ENCODE measurements at regions of chr15 and their contacts with region 1.

Region 1: GRCh38 chr15:47987908-47988532 is 132.8 kb upstream of the SLC24A5 start:
- DNase-seq: peak; percentile 69
- H3K4me3 ChIP-seq: no peak overlapping the region
- H3K27ac ChIP-seq: no peak overlapping the region
- H3K27me3 ChIP-seq: no peaks in the 10 kb centered on the region
- CTCF ChIP-seq: peak; percentile 64

Region 2: DNA sequence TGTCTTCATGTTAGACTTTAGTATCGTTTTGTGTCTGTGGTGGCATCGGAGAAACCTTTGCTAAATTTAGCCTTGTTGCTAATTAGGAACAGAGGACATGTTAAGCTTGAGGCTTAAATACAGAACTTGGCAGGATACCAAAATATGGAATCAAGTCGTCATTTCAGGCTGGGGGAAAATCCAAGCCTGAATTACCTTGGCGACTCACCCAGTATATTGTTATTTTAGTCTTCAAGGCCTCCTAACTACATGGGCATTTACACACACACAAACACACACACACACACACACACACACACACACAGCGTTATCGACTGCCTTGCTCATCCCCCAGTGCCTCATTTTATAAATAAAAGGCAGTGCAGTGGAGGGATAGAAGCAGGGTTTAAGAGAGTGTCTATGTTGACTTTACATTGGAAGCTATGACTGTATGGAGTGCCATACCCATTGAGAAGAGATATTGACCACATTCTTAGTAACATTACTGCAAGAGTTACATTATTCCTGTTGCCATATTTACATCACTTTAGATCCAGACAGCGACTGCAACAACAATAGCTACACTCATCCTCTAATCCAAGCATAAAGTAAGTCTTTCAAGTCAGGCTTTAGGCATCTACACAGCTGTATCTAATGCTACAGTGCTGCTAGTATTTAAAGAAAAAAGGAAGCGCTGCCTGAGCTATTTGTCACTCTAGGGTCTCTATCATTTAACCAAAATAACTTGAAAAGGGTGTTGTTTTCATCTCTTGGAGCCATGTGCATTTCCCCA is 481.5 kb before region 1 on chr15:
- in situ Hi-C with region 1: loop called (anchors 25 kb)
- DNase-seq: peak; percentile 37
- H3K4me3 ChIP-seq: no peak overlapping the region
- H3K27ac ChIP-seq: no peak overlapping the region
- H3K27me3 ChIP-seq: no peaks in the 10 kb centered on the region
- CTCF ChIP-seq: no peak

Region 3: DNA sequence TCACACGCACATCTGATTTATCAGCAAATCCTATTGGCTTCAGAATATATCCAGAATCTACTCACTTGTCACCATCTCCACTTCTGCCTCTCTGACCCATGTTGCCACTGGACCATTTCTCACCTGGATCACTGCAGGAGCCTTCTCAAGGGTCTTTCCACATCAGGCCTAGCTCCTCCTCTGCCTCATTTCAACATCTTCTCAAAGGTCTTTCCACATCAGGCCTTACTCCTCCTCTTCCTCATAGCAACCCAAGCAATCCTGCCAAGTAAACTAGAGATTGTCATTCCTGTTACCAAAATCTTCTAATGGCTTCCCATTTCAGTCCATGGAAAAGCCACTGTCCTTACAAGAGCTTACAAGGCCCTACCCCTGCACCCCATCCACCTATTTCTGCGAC is 325.2 kb after region 1 on chr15:
- in situ Hi-C with region 1: no loop called
- DNase-seq: no peak
- H3K4me3 ChIP-seq: no peak overlapping the region
- H3K27ac ChIP-seq: no peak overlapping the region
- H3K27me3 ChIP-seq: no peaks in the 10 kb centered on the region
- CTCF ChIP-seq: no peak

Region 4: DNA sequence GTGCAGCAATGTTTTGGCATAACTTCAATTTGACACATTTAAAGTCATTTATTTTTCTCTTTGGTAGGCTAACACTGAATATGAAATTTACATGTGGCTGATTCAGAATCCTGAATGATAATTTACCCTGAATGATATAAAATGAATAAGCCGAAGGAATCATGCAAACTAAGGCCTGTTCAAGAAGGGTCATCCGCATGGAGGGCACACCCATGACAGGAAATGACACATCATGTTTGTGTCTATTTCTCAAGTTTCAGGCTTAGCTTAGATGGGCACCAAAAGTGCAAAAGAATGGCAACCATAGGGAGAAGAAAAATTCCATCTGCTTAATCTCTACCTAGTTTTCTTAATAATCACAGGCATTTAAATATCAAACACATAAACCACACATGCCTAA is 484.7 kb after region 1 on chr15:
- in situ Hi-C with region 1: no loop called
- DNase-seq: peak; percentile 53
- H3K4me3 ChIP-seq: no peak overlapping the region
- H3K27ac ChIP-seq: peak overlapping the region; percentile 74
- H3K27me3 ChIP-seq: no peaks in the 10 kb centered on the region
- CTCF ChIP-seq: no peak

Region 5: GRCh38 chr15:48925714-48926223 is 937.7 kb after region 1 on chr15:
- in situ Hi-C with region 1: no loop called
- DNase-seq: peak; percentile 89
- H3K4me3 ChIP-seq: no peak overlapping the region
- H3K27ac ChIP-seq: peak overlapping the region; percentile 39
- H3K27me3 ChIP-seq: no peaks in the 10 kb centered on the region
- CTCF ChIP-seq: no peak